GM18951 (cell line): ENCODE measurements at regions of chr5 and their contacts with region 1.

Region 1: GRCh38 chr5:18305297-18305924 is 671.2 kb downstream of the TAF11L14 start:
- POLR2A ChIP-seq: no peak

Region 2: DNA sequence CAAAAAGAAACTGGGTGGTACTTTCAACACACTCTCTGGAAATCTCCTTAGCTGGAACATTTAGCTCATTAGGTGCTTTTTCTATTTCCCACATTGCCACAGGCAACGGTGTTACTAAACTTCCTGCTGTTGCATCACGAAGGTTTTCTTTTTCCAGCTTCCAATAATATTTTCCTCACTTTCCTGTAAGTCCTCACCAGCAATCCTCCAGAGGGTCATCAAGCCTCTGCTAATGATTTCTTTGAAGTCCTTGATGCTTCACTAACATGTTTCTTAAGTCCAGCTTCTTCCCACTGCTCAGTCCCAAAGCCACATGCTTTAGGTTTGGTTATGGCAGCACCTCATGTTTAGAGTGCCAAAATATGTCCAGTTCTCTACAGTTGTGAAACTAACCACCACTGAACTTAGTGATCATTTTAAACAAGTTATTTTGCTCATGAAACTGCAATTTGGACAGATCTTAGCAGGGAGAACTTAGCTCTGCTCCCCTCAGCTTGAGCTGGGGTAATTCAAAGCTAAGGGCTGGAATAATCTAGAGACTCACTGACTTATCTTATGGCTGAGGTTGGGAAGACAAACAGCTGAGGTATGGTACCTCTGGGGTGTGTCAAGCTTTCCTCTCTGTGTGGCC is 1648.7 kb before region 1 on chr5:
- in situ Hi-C with region 1: no loop called
- POLR2A ChIP-seq: no peak

Region 3: GRCh38 chr5:17216176-17216973 is 1089.0 kb before region 1 on chr5:
- in situ Hi-C with region 1: loop called (anchors 10 kb)
- POLR2A ChIP-seq: no peak

Region 4: DNA sequence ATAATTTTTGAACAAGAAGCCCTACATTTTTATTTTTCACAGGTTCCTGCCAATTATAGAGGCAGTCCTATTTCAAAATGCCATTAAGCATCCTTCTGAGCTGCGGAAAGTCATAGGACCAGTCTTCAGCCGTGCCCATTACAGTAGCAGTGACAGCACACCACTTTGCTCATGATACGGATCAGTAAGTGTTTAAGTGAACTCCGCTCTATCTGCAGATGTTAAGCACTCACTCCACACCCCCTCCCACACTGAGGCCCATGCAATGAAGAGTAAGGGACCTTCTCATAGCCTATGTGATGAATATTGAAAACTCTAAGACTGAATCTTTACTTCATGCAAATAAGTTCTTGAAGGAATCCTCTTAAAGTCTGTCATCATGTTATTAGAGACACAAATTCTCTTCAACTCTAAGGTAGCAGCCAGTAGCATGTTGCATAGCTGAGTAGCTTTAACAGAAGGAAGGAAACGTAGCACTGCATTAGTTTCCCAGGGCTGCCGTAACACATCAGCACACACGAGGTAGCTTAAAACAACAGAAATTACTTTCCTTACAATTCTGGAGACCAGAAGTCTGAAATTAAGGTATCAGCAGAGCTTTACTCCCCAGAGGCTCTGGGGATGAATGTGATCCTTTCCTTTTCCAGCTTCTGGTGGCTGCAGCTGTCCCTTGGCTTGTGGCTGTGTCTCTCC is 827.7 kb before region 1 on chr5:
- in situ Hi-C with region 1: loop called (anchors 25 kb)
- POLR2A ChIP-seq: no peak

Region 5: DNA sequence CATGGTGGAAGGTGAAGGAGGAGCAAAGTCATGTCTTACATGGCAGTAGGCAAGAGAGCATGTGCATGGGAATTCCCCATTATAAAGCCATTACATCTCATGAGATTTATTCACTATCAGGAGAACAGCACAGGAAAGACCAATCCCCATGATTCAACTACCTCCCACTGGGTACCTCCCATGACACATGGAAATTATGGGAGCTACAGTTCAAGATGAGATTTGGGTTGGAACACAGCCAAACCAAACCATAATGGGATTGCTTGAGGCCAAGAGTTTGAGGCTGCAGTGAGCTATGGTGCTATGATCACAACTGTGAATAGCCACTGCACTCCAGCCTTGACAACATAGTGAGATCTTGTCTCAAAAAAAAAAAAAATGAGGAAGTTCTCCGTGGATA is 89.4 kb before region 1 on chr5:
- in situ Hi-C with region 1: no loop called
- POLR2A ChIP-seq: no peak